CD4-positive, alpha-beta memory T cell (primary cell): ENCODE measurements at regions of chr16 and their contacts with region 1.

Region 1: GRCh38 chr16:12455287-12455798 is 348.3 kb downstream of the CPPED1 start:
- DNase-seq: peak in 1 of 5 donors; percentile 4
- H3K4me3 ChIP-seq: no peak overlapping the region
- H3K4me3 Mint-ChIP-seq: no peak overlapping the region
- H3K27ac ChIP-seq: no peak overlapping the region
- H3K27ac Mint-ChIP-seq: no peak overlapping the region
- H3K4me1 ChIP-seq: no peaks in the 10 kb centered on the region
- H3K4me1 Mint-ChIP-seq: peaks cover 1 to 12% (median 9%) of the 10 kb centered on the region in 4 donors
- H3K27me3 ChIP-seq: no peaks in the 10 kb centered on the region
- H3K27me3 Mint-ChIP-seq: no peaks in the 10 kb centered on the region

Region 2: DNA sequence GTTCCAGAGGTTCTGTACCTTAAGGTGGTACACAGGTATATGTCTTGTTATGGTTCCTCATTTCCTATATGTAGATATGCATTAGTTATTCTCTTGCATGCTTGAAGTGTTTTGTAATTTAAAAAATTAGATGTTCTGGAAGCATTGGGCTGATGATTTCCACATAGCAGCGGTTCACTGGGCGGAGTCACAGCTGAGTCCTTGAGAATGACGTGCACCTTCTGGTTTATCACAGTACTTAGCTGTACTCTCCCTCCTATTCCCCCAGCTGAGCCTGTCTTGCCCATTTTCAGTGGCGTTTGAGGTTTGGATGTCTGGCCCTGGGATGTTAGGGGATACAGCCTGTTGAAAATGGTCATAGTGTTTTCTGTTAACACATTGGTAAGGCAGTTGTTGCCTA is 151.7 kb before region 1 on chr16:
- CTCF ChIA-PET with region 1: no interaction called
- POLR2A ChIA-PET with region 1: no interaction called
- intact Hi-C with region 1: no loop called
- DNase-seq: no peak
- H3K4me3 ChIP-seq: no peak overlapping the region
- H3K4me3 Mint-ChIP-seq: no peak overlapping the region
- H3K27ac ChIP-seq: no peak overlapping the region
- H3K27ac Mint-ChIP-seq: no peak overlapping the region
- H3K4me1 ChIP-seq: no peaks in the 10 kb centered on the region
- H3K4me1 Mint-ChIP-seq: peaks cover 0 to 2% (median 0%) of the 10 kb centered on the region in 4 donors
- H3K27me3 ChIP-seq: no peaks in the 10 kb centered on the region
- H3K27me3 Mint-ChIP-seq: no peaks in the 10 kb centered on the region

Region 3: GRCh38 chr16:12406926-12407690 is 48.2 kb before region 1 on chr16:
- CTCF ChIA-PET with region 1: no interaction called
- POLR2A ChIA-PET with region 1: no interaction called
- intact Hi-C with region 1: no loop called
- DNase-seq: no peak
- H3K4me3 ChIP-seq: no peak overlapping the region
- H3K4me3 Mint-ChIP-seq: no peak overlapping the region
- H3K27ac ChIP-seq: no peak overlapping the region
- H3K27ac Mint-ChIP-seq: peak overlapping the region in 2 of 7 donors; percentile 29 to 37
- H3K4me1 ChIP-seq: no peaks in the 10 kb centered on the region
- H3K4me1 Mint-ChIP-seq: peaks cover 0 to 2% (median under 1%) of the 10 kb centered on the region in 4 donors
- H3K27me3 ChIP-seq: no peaks in the 10 kb centered on the region
- H3K27me3 Mint-ChIP-seq: no peaks in the 10 kb centered on the region

Region 4: DNA sequence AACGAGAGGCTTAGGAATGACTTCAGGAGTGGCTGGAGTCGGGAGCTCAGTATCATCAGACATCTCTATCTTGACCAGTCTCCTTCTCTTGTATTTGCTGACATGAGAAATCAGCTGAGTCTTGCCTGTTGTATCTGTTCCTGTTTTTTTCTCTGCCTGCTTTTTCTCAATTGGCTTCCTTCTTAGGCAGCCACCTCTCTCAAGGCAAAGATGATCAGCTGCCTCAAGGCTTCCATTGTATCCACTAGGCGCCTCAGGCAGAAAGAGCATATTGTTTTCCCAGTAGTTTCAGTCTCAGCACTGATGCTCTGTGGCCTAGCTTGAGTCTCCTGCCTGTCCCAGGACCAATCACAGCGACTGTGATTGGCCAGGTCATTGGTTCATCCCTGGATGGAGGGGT is 42.2 kb after region 1 on chr16:
- CTCF ChIA-PET with region 1: no interaction called
- POLR2A ChIA-PET with region 1: no interaction called
- intact Hi-C with region 1: no loop called
- DNase-seq: no peak
- H3K4me3 ChIP-seq: no peak overlapping the region
- H3K4me3 Mint-ChIP-seq: no peak overlapping the region
- H3K27ac ChIP-seq: no peak overlapping the region
- H3K27ac Mint-ChIP-seq: peak overlapping the region in 1 of 7 donors; percentile 10
- H3K4me1 ChIP-seq: no peaks in the 10 kb centered on the region
- H3K4me1 Mint-ChIP-seq: peaks cover 0 to 7% (median 2%) of the 10 kb centered on the region in 4 donors
- H3K27me3 ChIP-seq: no peaks in the 10 kb centered on the region
- H3K27me3 Mint-ChIP-seq: no peaks in the 10 kb centered on the region

Region 5: GRCh38 chr16:12721841-12722421 is 266.6 kb after region 1 on chr16:
- CTCF ChIA-PET with region 1: no interaction called
- POLR2A ChIA-PET with region 1: no interaction called
- intact Hi-C with region 1: no loop called
- DNase-seq: no peak
- H3K4me3 ChIP-seq: no peak overlapping the region
- H3K4me3 Mint-ChIP-seq: no peak overlapping the region
- H3K27ac ChIP-seq: no peak overlapping the region
- H3K27ac Mint-ChIP-seq: no peak overlapping the region
- H3K4me1 ChIP-seq: no peaks in the 10 kb centered on the region
- H3K4me1 Mint-ChIP-seq: peaks cover 0 to 1% (median under 1%) of the 10 kb centered on the region in 4 donors
- H3K27me3 ChIP-seq: no peaks in the 10 kb centered on the region
- H3K27me3 Mint-ChIP-seq: no peaks in the 10 kb centered on the region

Region 6: GRCh38 chr16:12819126-12820117 is 364.1 kb after region 1 on chr16:
- CTCF ChIA-PET with region 1: interaction called, 4 read pairs
- POLR2A ChIA-PET with region 1: no interaction called
- intact Hi-C with region 1: loop called (anchors 2 kb)
- DNase-seq: peak; percentile 51 to 67 (median 62)
- H3K4me3 ChIP-seq: no peak overlapping the region
- H3K4me3 Mint-ChIP-seq: no peak overlapping the region
- H3K27ac ChIP-seq: no peak overlapping the region
- H3K27ac Mint-ChIP-seq: no peak overlapping the region
- H3K4me1 ChIP-seq: no peaks in the 10 kb centered on the region
- H3K4me1 Mint-ChIP-seq: peaks cover 3 to 5% (median 3%) of the 10 kb centered on the region in 4 donors
- H3K27me3 ChIP-seq: no peaks in the 10 kb centered on the region
- H3K27me3 Mint-ChIP-seq: peaks cover 2 to 5% of the 10 kb centered on the region in 2 donors